ENCODE measurements at regions of chr2 and their contacts with region 1.

Region 1: DNA sequence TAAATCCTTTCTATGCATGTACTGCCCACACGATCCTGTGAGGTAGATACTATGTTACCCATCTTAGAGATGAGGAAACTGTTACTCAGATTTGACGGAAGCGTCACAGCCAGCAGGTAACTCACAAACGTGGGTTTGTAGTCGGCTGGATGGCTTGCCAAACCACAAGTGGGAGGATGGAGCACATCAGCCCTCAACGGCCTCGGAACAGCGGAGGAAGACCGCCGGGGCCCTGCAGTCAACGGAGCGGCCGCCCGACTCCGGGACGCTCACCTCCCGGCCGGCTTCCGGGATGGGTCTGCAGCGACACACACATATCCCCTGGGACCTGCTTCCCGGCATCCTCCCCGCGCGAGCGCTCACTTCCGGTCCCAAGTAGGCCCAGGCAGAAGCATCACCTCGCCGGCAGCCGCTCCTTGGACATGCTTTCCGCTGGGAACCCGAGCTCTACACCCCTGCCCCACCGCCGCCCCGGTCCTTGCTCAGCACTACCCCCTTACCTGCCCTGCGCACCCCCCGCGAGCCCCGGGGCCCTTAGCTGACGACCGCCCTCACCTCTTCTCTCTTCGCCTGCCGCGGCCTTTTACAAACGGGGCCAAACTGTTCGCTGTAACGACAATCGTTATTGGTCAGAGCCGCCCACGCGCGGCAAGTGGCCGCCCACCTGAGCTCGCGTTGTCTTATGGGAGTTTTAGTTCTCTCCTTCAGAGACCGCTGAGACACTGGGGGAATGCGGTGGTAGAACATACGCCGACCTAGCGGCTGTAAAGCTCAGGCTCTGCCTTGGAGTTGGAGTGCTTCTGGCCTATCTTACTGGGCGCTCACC is at the start of gene C2orf42:
- DNase-seq: peak; percentile 92 to 99 (median 95)

Region 2: DNA sequence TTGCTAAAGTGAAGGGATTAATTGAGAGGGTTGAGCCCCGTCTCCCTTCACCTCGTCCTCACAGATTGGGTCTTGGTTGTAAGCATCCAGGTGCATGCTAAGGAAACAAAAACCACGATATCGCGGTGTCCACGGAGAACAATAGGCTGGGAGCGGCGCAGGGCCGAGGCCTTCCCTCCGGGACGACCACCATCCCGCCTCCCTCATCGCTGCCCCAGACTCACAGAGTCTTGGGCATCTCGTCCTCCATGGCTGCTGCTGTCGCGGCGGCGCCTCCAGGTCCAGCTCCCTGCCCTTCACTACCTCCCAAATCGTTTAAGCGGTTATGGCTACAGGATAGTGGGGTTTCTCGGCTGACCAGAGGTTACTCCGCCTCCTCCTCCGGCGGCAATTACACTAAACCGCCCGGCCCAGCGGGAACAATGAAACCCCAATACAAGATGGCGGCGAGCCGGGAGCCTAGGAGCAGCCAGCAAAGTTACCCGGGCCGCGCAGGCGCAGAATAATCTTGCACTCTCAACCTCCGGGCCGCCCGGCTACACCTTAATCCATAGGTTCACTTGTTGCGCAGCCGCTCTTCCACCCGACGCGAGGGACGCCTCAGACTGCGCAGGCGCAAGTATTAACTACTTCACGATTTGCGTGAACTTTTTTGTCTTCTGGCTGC is 57.7 kb after region 1 on chr2 and contains the start of gene TIA1:
- intact Hi-C with region 1: loop called (anchors 1 kb)
- DNase-seq: peak; percentile 90 to 99 (median 94)